HEK293 (cell line): ENCODE measurements at regions of chr1 and their contacts with region 1.

Region 1: GRCh38 chr1:26677306-26678115 is 18.3 kb upstream of the ARID1A start:
- H3K4me3 ChIP-seq: no peak overlapping the region
- H3K27ac ChIP-seq: no peak overlapping the region
- H3K4me1 ChIP-seq: no peaks in the 10 kb centered on the region
- CTCF ChIP-seq: peak; percentile 97

Region 2: DNA sequence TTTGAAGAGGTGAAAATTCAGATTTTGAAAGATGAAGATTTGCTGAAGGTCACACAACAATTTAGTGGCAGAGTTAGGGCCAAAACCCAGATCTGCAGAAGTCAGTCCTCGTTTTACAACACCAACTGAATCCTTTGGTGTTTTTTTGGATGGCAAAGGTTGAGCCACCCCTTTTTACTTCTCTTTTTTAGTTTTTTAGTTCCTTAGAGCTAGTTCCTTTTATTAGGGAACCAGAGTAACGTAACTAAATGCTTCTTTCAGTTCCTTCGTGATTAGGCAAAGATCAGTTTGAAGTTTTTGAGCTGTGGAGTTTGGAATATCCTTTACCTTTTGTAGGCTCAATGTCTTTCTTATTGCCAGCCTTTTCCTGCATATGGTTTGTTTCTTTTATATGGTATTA is 49.6 kb before region 1 on chr1:
- CTCF ChIA-PET with region 1: interaction called, 12 read pairs
- POLR2A ChIA-PET with region 1: no interaction called
- H3K4me3 ChIP-seq: no peak overlapping the region
- H3K27ac ChIP-seq: no peak overlapping the region
- H3K4me1 ChIP-seq: no peaks in the 10 kb centered on the region
- CTCF ChIP-seq: no peak

Region 3: GRCh38 chr1:26645734-26646133 is 31.8 kb before region 1 on chr1:
- CTCF ChIA-PET with region 1: no interaction called
- POLR2A ChIA-PET with region 1: no interaction called
- H3K4me3 ChIP-seq: no peak overlapping the region
- H3K27ac ChIP-seq: no peak overlapping the region
- H3K4me1 ChIP-seq: no peaks in the 10 kb centered on the region
- CTCF ChIP-seq: no peak

Region 4: GRCh38 chr1:26666855-26667254 is 10.7 kb before region 1 on chr1:
- CTCF ChIA-PET with region 1: interaction called, 37 read pairs
- POLR2A ChIA-PET with region 1: no interaction called
- H3K4me3 ChIP-seq: no peak overlapping the region
- H3K27ac ChIP-seq: no peak overlapping the region
- H3K4me1 ChIP-seq: no peaks in the 10 kb centered on the region
- CTCF ChIP-seq: no peak